GM12878 (cell line): ENCODE measurements at regions of chr9 and their contacts with region 1.

Region 1: DNA sequence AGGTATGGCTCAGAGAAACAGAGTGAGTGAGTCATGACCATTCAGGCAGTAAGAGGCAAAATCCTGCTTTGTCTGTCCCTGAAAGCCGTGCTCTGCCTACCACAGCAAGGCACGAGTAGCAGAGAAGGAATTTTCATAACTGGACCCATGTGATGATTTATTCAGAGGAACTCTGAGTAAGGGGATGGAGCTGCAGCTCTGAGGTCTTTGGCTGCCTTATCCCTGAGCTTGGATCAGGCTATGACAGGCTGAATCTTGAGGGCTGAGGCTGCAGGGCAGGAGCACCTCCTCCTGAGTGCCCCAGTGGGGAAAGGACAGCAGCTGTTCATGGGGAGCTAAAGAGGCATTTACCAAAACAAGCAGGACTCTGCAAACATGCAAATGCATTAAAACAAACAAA is 183.4 kb downstream of the PAPPA start:
- DNase-seq: no peak
- ATAC-seq: no peak
- H3K4me3 ChIP-seq: no peak overlapping the region
- H3K27ac ChIP-seq: no peak overlapping the region
- H3K4me1 ChIP-seq: no peaks in the 10 kb centered on the region
- H3K27me3 ChIP-seq: no peaks in the 10 kb centered on the region; a peak in 2 of 4 replicates
- CTCF ChIP-seq: no peak
- EP300 ChIP-seq: no peak
- POLR2A ChIP-seq: no peak
- RAD21 ChIP-seq: no peak

Region 2: DNA sequence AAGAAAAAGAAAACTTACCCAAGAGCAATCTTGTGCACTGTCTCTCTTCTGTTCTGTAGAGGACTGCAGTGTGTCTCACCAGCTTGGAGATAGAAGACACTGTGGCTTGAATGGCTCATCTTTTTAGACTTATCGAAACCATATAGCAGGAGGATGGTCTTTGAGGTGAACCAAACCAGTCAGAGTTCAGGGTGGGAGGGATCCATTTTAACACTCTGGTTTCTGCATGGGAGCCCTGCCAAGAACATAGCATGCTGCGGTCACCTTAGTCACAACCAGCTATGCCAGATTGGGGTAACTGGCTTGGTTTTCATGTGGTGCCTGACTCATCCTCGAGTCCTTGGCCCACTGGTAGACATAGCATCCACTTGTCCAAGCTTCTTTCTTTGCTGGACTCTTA is 48.4 kb before region 1 on chr9:
- CTCF ChIA-PET with region 1: no interaction called
- POLR2A ChIA-PET with region 1: no interaction called
- RAD21 ChIA-PET with region 1: no interaction called
- SMC1A ChIA-PET with region 1: no interaction called
- in situ Hi-C with region 1: no loop called
- intact Hi-C with region 1: no loop called
- DNase-seq: no peak
- ATAC-seq: no peak
- H3K4me3 ChIP-seq: no peak overlapping the region
- H3K27ac ChIP-seq: no peak overlapping the region
- H3K4me1 ChIP-seq: no peaks in the 10 kb centered on the region
- H3K27me3 ChIP-seq: no peaks in the 10 kb centered on the region; a peak in 1 of 4 replicates
- CTCF ChIP-seq: no peak
- EP300 ChIP-seq: no peak
- POLR2A ChIP-seq: no peak
- RAD21 ChIP-seq: no peak

Region 3: GRCh38 chr9:116387934-116388698 is 51.1 kb after region 1 on chr9:
- CTCF ChIA-PET with region 1: no interaction called
- POLR2A ChIA-PET with region 1: no interaction called
- RAD21 ChIA-PET with region 1: no interaction called
- SMC1A ChIA-PET with region 1: no interaction called
- in situ Hi-C with region 1: no loop called
- intact Hi-C with region 1: loop called (anchors 5 kb)
- DNase-seq: no peak
- ATAC-seq: peak; percentile 49
- H3K4me3 ChIP-seq: no peak overlapping the region
- H3K27ac ChIP-seq: no peak overlapping the region
- H3K4me1 ChIP-seq: peaks cover 9% of the 10 kb centered on the region
- H3K27me3 ChIP-seq: no peaks in the 10 kb centered on the region
- CTCF ChIP-seq: no peak
- EP300 ChIP-seq: no peak
- POLR2A ChIP-seq: no peak
- RAD21 ChIP-seq: no peak

Region 4: DNA sequence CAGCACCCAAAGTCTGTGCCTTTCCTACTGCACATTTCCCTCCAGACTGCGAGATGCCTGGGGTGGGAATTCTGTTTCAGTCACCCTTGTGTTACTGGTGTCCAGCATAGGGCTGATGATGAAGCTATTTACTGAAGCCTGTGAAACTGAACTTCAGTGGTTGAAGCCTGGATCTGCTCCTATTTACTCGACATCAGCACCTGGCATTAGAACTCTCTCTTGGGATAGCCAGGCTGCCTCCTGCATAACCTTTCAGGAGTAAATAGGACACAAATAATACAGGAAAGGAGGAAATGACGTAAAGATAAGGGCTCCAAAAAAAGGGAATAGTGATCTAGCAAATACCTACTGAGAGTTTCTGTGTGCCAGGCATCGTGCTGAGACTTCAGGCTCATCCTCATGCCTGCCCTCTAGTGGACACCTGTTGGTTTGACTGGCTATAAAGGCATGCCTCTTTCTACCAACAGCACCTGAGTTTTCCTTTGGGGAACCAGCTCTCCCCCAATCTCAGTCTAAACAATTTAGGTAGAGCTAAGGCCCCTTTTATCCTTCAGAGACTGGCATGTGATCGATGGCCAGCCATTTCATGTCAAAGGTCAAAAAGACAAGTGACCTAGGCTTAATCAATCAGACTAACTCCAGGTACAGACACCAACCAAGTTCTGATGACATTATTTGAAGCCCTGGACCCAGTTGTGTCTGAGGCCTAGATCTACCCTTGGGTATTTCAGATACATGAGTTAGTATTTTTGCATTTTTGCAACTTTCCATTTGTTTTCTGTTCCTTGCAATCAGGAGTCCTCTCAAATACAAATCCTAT is 158.0 kb after region 1 on chr9:
- CTCF ChIA-PET with region 1: no interaction called
- POLR2A ChIA-PET with region 1: no interaction called
- RAD21 ChIA-PET with region 1: no interaction called
- SMC1A ChIA-PET with region 1: no interaction called
- in situ Hi-C with region 1: no loop called
- intact Hi-C with region 1: loop called (anchors 10 kb)
- DNase-seq: no peak
- ATAC-seq: peak; percentile 82
- H3K4me3 ChIP-seq: no peak overlapping the region
- H3K27ac ChIP-seq: no peak overlapping the region
- H3K4me1 ChIP-seq: no peaks in the 10 kb centered on the region
- H3K27me3 ChIP-seq: no peaks in the 10 kb centered on the region
- CTCF ChIP-seq: peak; percentile 60 to 79 (median 77)
- EP300 ChIP-seq: no peak
- POLR2A ChIP-seq: no peak
- RAD21 ChIP-seq: peak; percentile 55